HEK293T (cell line): ENCODE measurements at regions of chr2 and their contacts with region 1.

Region 1: GRCh38 chr2:219073413-219074129 is 12.8 kb upstream of the IHH start:
- DNase-seq: peak; percentile 70

Region 2: GRCh38 chr2:219057709-219058540 is 15.6 kb before region 1 on chr2:
- CTCF ChIA-PET with region 1: interaction called, 15 read pairs
- POLR2A ChIA-PET with region 1: no interaction called
- DNase-seq: peak; percentile 85

Region 3: DNA sequence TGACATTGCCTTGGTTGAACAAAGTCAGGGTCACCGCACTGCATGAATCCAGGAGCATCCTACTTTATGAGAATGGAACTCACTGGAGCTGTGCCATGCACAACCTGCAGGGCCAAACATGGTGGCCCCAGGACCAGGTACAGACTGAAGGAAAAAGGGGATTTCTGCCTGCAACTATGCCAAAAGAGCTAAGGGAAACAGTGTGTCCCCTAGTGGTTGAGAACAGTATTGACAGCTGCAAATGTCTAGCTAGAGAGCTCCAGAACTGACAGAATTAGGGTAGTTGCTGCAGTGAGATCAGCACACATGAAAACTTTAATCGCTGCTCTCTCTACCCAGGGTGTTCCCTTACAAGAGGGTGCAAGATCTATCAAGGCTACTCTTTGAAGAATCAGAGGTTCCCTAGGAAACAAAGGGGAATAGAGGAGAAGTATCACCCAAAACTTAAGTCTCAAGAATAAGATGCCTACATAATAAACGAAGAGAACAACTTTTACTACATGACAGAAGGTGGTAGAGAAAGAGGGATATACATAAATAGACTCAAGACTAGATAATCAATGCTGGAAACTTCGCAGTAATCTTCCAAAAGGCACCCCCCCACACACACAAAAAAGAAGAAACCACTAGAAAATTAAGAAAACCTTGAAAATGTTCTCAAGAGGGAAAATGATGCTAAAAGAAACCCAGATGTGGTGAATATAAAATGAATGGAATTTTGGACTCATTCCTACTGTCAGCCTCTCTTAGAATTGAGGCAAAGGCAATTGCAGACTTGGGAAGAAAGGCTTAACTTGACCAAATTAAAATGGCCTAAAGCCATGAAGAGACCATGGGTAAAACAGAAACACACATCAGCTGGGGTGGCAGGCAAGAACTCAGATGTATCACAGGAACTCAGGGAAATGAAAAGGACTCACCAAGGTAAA is 30.8 kb after region 1 on chr2:
- CTCF ChIA-PET with region 1: interaction called, 13 read pairs
- POLR2A ChIA-PET with region 1: interaction called, 4 read pairs
- DNase-seq: peak; percentile 63